ENCODE measurements at regions of chr16 and their contacts with region 1.

Region 1: GRCh38 chr16:30112197-30113030 is 923 bp downstream of the GDPD3 start:
- DNase-seq: peak; percentile 66 to 78
- H3K4me3 ChIP-seq: no peak overlapping the region
- H3K4me3 Mint-ChIP-seq: no peak overlapping the region
- H3K27ac Mint-ChIP-seq: peak overlapping the region; percentile 2
- H3K4me1 ChIP-seq: peaks cover 18% of the 10 kb centered on the region; the same call in 1 of the 2 replicates
- H3K4me1 Mint-ChIP-seq: peaks cover 9% of the 10 kb centered on the region
- H3K27me3 ChIP-seq: no peaks in the 10 kb centered on the region
- H3K27me3 Mint-ChIP-seq: no peaks in the 10 kb centered on the region
- CTCF ChIP-seq: peak; percentile 61 to 75

Region 2: DNA sequence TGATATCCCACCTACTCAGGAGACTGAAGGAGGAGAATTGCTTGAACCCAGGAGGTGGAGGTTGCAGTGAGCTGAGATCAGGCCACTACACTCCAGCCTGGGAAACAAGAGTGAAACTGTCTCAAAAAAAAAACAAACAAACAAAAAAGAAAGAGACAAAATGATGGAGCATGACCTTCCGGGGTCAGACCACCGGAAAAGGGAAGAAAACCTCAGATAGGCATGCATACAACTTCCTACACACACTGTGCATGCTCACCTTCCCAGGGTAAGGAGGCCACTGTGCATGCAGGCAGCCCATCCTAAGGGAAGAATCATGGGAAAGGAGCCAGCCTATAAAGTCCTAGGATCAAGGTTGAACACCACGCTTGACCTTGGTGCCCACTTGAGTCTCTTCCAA is 20.2 kb after region 1 on chr16:
- CTCF ChIA-PET with region 1: interaction called, 3 read pairs
- POLR2A ChIA-PET with region 1: interaction called, 10 read pairs
- intact Hi-C with region 1: no loop called
- DNase-seq: no peak
- H3K4me3 ChIP-seq: no peak overlapping the region
- H3K4me3 Mint-ChIP-seq: no peak overlapping the region
- H3K27ac Mint-ChIP-seq: no peak overlapping the region
- H3K4me1 ChIP-seq: no peaks in the 10 kb centered on the region
- H3K4me1 Mint-ChIP-seq: no peaks in the 10 kb centered on the region
- H3K27me3 ChIP-seq: no peaks in the 10 kb centered on the region
- H3K27me3 Mint-ChIP-seq: no peaks in the 10 kb centered on the region
- CTCF ChIP-seq: no peak